ENCODE measurements at regions of chr17 and their contacts with region 1.

Region 1: DNA sequence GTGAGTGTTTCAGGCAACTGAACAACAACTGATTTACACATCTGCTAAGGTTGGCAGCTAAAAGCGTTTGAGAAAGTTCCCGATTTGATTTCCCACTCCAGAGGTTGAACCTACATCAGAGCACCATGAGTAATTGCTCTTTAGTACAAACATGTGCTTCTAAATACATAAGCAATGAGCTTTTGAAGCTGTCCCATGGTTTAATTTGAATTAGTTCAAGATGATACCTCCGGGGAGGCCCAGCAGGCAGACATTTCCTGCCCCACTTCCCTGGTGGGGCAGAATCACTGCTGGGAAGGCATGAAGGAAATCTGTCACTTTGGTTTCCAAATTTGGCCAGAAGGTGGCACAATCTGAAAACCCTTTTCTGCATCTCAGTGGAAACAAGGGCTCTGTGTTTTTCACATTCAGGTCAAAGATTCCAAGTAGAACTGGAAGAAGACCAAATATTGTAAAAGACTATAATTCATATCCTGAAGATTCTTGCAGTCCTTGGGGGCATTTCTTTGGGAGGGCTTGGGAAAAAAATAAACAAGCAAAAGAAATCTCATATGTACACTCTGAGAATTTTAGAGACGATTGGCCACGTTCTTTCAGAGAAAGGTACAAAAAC is 176.2 kb upstream of the FAM20A start:
- DNase-seq: peak; percentile 50 to 64
- ATAC-seq: peak; percentile 57 to 65
- H3K4me3 ChIP-seq: no peak overlapping the region
- H3K27ac ChIP-seq: peak overlapping the region; percentile 39 to 58 (median 52)
- H3K4me1 ChIP-seq: peaks cover 5 to 12% of the 10 kb centered on the region in 2 donors
- H3K27me3 ChIP-seq: no peaks in the 10 kb centered on the region
- CTCF ChIP-seq: peak; percentile 26 to 62 (median 52)
- POLR2A ChIP-seq: no peak

Region 2: DNA sequence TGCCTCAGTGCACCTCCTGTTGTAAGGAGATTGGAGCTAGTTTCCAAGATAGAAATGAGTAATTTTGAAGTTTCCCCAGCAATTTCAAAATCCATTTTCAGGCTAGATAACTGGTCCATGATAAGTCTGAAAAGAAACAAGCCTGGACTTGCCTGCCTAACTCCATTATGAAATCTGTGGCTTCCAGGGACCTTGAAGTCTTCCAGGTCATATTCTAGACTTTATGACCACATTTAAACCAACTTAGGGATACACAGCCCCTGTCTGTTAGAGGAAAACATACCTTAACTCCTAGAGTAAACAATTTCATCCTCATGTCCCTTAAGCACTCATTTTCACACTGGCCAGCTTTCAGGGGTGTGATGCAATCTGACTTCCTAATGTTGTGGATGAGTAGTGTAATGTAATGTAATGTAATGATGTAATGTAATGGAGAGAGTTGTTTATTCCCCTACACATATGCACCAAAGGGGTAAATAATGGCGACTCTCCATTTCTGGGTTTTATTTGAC is 79.4 kb before region 1 on chr17:
- in situ Hi-C with region 1: loop called in 1 of 4 experiments (anchors 25 kb)
- intact Hi-C with region 1: no loop called
- DNase-seq: peak in 1 of 2 donors; percentile 8
- ATAC-seq: peak in 1 of 2 donors; percentile 41
- H3K4me3 ChIP-seq: no peak overlapping the region
- H3K27ac ChIP-seq: peak overlapping the region in 1 of 4 donors; percentile 22
- H3K4me1 ChIP-seq: no peaks in the 10 kb centered on the region
- H3K27me3 ChIP-seq: no peaks in the 10 kb centered on the region
- CTCF ChIP-seq: no peak
- POLR2A ChIP-seq: no peak

Region 3: DNA sequence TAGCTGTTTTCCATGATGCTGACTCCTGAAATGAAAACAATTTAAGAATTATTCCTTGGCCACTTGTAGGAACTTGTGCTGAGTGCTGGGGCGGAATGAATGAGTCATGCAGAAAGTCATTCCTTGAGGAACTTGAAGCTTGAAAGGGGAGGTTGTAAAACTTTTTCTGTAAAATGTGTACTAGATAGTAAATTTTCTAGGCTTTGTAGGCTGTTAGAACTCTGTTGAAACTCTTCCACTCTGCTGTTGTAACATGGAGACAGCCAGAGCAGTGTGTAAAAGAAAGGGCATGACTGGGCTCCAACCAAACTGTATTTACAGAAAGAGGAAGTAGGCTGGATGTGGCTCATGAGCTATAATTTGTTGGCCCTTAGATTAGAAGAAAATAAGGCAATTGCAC is 131.7 kb after region 1 on chr17:
- in situ Hi-C with region 1: loop called in 1 of 4 experiments (anchors 10 kb)
- intact Hi-C with region 1: loop called (anchors 5 kb)
- DNase-seq: peak in 1 of 2 donors; percentile 31
- ATAC-seq: peak; percentile 23 to 65
- H3K4me3 ChIP-seq: no peak overlapping the region
- H3K27ac ChIP-seq: peak overlapping the region in 2 of 4 donors; percentile 22 to 31
- H3K4me1 ChIP-seq: peaks cover 5 to 10% of the 10 kb centered on the region in 2 donors
- H3K27me3 ChIP-seq: no peaks in the 10 kb centered on the region
- CTCF ChIP-seq: no peak
- POLR2A ChIP-seq: no peak

Region 4: DNA sequence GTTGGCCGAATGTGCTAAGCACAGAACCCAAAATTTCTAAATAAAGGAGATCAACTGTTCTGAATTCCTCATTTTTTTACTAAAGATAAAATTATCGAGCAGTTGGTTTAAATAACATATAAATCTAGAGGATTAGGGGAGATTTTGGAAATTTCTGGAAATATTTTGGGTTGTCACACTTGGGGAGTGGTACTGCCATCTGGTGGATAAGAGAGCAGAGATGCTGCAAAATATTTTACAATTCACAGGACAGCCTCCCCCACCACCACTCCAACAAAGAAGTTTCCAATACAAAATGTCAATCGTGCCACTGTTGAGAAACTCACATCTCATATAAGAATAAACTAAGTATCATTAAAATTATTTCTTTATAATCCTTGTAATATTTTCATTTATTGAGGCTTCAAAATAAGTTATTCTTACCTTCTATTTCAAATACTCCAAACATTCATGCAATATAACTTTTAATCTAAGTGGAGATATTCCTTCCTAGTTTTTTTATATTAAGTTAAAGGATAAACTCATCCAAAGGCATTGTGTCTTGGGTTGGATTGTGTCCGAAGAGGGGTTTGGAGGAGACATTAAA is 194.9 kb after region 1 on chr17:
- in situ Hi-C with region 1: loop called (anchors 5 to 10 kb)
- intact Hi-C with region 1: loop called (anchors 1 kb)
- DNase-seq: no peak
- ATAC-seq: no peak
- H3K4me3 ChIP-seq: no peak overlapping the region
- H3K27ac ChIP-seq: no peak overlapping the region
- H3K4me1 ChIP-seq: no peaks in the 10 kb centered on the region
- H3K27me3 ChIP-seq: no peaks in the 10 kb centered on the region
- CTCF ChIP-seq: peak; percentile 25 to 52 (median 44)
- POLR2A ChIP-seq: no peak

Region 5: DNA sequence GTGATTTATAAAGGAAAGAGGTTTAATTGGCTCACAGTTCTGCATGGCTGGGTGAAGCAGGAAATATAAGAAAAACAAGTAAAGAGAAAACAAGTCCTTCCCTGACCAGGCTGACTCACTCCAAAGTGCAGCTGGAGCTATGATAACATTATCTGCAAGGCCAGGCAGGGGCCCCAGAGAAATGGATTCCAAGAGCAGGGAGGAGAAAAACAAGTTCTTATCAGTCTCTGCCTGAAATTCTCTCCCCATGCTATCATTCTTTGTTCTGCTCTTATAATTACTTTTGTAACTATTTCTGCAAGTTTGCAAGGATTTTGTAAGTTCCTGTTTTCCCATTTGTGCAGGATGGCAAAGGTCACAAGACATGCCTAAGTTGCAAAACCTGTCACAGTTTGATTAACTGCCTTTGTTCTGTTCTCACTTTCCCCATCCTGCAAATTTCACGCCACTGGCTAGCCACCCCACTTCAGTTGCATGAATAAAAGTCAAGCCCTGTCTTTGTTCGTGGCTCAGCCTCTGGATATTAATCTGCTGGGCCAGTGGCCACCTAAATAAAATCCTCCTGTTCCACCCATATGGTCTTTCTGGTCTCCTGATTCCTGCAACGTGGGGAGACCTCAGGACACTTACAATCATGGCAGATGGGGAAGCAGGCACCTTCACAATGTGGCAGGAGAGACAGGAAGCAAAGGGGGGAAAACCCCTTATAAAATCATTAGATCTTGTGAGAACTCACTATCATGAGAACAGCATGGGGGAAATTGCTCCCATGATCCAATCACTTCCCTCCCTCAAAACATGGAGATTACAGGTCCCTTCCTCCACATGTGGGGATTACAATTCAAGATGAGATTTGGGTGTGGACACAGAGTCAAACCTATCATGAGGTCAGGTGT is 270.3 kb after region 1 on chr17:
- in situ Hi-C with region 1: no loop called
- intact Hi-C with region 1: loop called (anchors 5 kb)
- DNase-seq: peak; percentile 26 to 48
- ATAC-seq: peak; percentile 36 to 49
- H3K4me3 ChIP-seq: no peak overlapping the region
- H3K27ac ChIP-seq: peak overlapping the region in 2 of 4 donors; percentile 33 to 39
- H3K4me1 ChIP-seq: no peaks in the 10 kb centered on the region
- H3K27me3 ChIP-seq: no peaks in the 10 kb centered on the region
- CTCF ChIP-seq: no peak
- POLR2A ChIP-seq: no peak

Measured in gastrocnemius medialis (tissue), 4 donors.